ENCODE measurements at regions of chr2 and their contacts with region 1.

Region 1: DNA sequence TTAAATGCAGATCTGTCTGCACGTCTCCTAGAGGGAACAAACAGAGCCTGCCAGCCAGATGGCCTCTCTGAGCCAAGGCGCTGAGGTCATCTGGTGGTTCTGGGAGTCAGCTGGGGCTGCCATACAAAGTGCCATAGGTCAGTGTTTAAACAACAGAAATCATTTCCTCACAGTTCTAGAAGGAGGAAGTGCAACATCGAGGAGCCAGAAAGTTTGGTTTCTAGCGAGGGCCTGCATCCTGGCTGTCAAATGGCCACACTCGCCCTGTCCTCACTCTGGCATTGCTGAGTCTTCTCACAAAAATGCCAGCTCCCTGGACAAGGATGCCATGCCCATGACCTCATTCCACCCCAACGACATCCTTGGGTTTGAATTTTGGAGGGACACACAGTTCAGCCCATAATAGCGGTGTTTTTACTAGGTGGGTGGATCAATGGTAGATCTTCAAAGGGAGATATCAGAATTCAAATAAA is 59.6 kb downstream of the MYT1L start:
- DNase-seq: peak; percentile 26 to 46
- ATAC-seq: peak; percentile 75 to 96 (median 90)
- H3K4me3 ChIP-seq: no peak overlapping the region
- H3K27ac ChIP-seq: peak overlapping the region in 4 of 10 donors; percentile 2 to 39 (median 30)
- H3K4me1 ChIP-seq: peaks cover 0 to 15% (median 7%) of the 10 kb centered on the region in 9 donors
- H3K27me3 ChIP-seq: peaks cover 0 to 3% (median 0%) of the 10 kb centered on the region in 7 donors
- CTCF ChIP-seq: peak in 1 of 9 donors; percentile 22

Region 2: GRCh38 chr2:2320486-2321199 is 49.1 kb after region 1 on chr2:
- intact Hi-C with region 1: loop called in 1 of 10 experiments (anchors 1 kb)
- DNase-seq: no peak
- ATAC-seq: no peak
- H3K4me3 ChIP-seq: no peak overlapping the region
- H3K27ac ChIP-seq: no peak overlapping the region
- H3K4me1 ChIP-seq: no peaks in the 10 kb centered on the region
- H3K27me3 ChIP-seq: peaks cover 0 to 54% (median 11%) of the 10 kb centered on the region in 7 donors
- CTCF ChIP-seq: no peak

Region 3: DNA sequence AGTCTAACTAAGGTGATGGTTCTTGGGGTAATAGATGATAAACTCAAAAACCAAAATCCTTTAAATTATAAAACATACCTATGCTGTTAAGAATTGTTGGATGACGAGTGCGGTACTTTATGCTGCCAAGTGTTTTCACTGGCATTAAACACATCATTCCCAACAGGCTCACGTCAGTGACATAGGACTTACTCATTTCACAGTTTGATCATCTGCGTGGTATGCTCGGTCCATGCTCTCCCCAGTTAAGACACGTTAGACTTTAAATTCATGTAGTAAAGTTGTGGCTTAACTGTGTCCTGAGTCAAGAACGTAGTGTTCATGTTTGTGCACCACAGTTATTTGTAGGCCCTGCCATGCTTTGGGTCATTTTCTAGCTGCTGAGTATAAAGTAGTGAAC is 185.2 kb after region 1 on chr2:
- intact Hi-C with region 1: loop called in 1 of 10 experiments (anchors 5 kb)
- DNase-seq: no peak
- ATAC-seq: no peak
- H3K4me3 ChIP-seq: no peak overlapping the region
- H3K27ac ChIP-seq: no peak overlapping the region
- H3K4me1 ChIP-seq: no peaks in the 10 kb centered on the region
- H3K27me3 ChIP-seq: peaks cover 0 to 13% (median 9%) of the 10 kb centered on the region in 7 donors
- CTCF ChIP-seq: no peak